Calu3 (cell line): ENCODE measurements at regions of chr17 and their contacts with region 1.

Region 1: DNA sequence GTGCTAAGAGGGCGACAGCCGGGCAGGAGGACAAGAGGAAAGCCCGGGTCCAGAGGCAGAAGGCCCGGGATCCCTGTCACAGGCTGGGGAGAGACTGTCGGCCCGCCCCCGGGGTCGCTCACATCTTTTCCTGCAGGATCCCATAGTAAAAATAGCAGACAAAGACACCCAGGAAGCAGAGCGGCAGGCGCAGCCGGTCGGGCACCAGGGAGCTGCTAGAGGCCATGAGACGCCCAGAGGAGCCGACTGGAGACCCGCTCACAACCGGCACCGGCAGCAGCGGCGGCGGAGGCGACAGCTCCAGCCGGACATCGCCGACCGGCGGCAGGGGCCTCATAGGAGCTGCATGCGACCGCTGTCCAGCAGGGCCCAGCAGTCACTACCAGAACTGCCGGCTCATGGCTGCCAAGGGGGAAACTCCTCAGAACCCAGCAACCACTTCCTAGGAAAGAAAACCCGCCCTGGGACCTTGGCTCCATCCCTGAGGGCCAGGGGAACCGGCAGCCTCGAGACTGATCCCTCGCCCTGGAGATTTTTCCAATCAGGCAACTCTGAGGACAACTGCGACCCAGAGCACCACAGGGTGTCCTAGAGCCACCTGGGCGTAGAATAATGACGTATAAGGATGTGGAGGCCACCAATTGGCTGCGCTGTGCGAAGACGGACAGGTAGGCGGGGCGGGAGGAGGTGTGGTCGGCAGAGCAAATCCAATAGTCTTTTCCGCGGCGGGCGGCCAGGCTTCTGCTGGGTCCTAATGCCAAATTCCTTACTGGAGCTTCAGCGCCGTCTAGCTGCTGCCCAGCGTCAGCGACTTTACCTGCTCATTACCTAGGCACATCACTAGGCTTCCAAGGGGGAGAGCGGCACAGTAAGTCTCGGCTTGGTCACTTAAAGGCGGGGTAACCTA is at the start of gene SLC35B1:
- DNase-seq: peak; percentile 100
- H3K4me3 Mint-ChIP-seq: peak within 1 kb of the TSS; percentile 96
- H3K27ac Mint-ChIP-seq: peak within 1 kb of the TSS; percentile 99
- H3K4me1 Mint-ChIP-seq: peaks cover 37% of the 10 kb centered on the region
- H3K27me3 Mint-ChIP-seq: no peaks in the 10 kb centered on the region
- CTCF ChIP-seq: peak; percentile 87
- total RNA-seq, gene SLC35B1: 117 and 127 TPM in 2 replicates

Region 2: GRCh38 chr17:49239963-49240362 is 467.9 kb before region 1 on chr17:
- CTCF ChIA-PET with region 1: interaction called, 13 read pairs
- intact Hi-C with region 1: no loop called
- DNase-seq: no peak
- H3K4me3 Mint-ChIP-seq: no peak overlapping the region
- H3K27ac Mint-ChIP-seq: no peak overlapping the region
- H3K4me1 Mint-ChIP-seq: no peaks in the 10 kb centered on the region
- H3K27me3 Mint-ChIP-seq: peaks cover 35% of the 10 kb centered on the region
- CTCF ChIP-seq: no peak

Region 3: GRCh38 chr17:49567871-49568694 is 139.8 kb before region 1 on chr17:
- CTCF ChIA-PET with region 1: interaction called, 12 read pairs
- intact Hi-C with region 1: no loop called
- DNase-seq: peak; percentile 98
- H3K4me3 Mint-ChIP-seq: peak overlapping the region; percentile 68
- H3K27ac Mint-ChIP-seq: no peak overlapping the region
- H3K4me1 Mint-ChIP-seq: peaks cover 14% of the 10 kb centered on the region
- H3K27me3 Mint-ChIP-seq: peaks cover 64% of the 10 kb centered on the region
- CTCF ChIP-seq: peak; percentile 98

Region 4: DNA sequence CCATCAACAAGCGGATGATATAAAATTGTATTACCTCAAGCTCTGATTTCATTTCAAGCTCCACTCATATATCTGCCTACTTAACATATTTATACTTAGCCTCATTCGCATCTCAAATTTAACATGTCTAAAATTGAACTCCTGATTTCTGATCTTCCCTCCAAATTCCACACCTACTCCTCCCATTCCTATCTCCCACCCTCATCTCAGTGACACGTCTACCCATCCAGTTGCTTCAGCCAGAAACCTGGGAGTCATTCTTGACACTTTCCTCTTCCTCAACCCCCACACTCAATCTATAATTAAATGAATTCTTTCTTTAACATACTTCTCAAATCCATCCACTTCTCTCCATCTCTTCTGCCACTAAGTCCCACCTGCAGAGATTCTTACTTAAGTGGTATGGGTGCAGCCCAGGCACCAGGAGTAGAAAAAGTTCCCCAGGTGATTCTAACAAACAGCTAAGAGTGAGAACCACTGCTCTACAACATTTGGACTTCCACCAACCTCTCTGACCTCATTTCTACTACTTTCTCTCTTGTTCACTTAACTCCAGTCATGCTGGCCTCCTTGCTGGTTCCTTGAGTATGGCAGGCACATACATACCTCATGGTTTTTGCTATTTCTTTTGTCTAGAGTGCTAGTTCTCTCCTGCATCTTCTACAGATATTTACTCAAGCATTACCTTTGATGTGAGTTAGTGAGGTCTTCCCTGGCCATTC is 48.0 kb before region 1 on chr17:
- CTCF ChIA-PET with region 1: no interaction called
- intact Hi-C with region 1: no loop called
- DNase-seq: no peak
- H3K4me3 Mint-ChIP-seq: no peak overlapping the region
- H3K27ac Mint-ChIP-seq: no peak overlapping the region
- H3K4me1 Mint-ChIP-seq: no peaks in the 10 kb centered on the region
- H3K27me3 Mint-ChIP-seq: no peaks in the 10 kb centered on the region
- CTCF ChIP-seq: no peak

Region 5: DNA sequence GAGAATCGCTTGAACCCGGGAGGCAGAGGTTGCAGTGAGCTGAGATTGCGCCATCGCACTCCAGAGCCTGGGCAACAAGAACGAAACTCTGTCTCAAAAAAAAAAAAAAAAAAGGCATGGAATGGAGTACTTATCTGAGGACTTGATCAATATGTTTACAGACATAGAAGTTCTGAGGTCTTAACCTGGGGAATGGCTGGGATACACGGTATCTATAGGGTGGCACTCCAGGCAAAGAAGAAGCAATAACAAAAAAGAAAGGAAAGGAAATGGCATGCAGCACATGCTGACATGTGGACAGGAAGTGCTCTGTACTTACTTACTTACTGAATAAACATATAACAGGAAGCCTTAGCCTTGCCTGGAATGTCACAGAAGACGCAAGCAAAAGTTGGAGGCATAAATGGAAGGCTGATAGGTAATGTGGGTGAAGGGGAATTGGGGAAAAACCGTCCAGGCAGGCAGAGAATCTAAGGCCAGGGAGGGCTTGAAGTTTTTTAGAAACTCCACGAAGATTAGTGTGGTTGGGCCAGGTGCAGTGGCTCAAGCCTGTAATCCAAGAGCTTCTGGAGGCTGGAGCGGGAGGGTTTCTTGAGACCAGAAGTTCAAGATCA is 19.9 kb before region 1 on chr17:
- CTCF ChIA-PET with region 1: no interaction called
- intact Hi-C with region 1: no loop called
- DNase-seq: no peak
- H3K4me3 Mint-ChIP-seq: no peak overlapping the region
- H3K27ac Mint-ChIP-seq: peak overlapping the region; percentile 28
- H3K4me1 Mint-ChIP-seq: peaks cover 17% of the 10 kb centered on the region
- H3K27me3 Mint-ChIP-seq: peaks cover 22% of the 10 kb centered on the region
- CTCF ChIP-seq: no peak

Region 6: GRCh38 chr17:49779739-49780231 is 71.9 kb after region 1 on chr17:
- CTCF ChIA-PET with region 1: no interaction called
- intact Hi-C with region 1: loop called (anchors 5 kb)
- DNase-seq: peak; percentile 36
- H3K4me3 Mint-ChIP-seq: no peak overlapping the region
- H3K27ac Mint-ChIP-seq: no peak overlapping the region
- H3K4me1 Mint-ChIP-seq: no peaks in the 10 kb centered on the region
- H3K27me3 Mint-ChIP-seq: peaks cover 86% of the 10 kb centered on the region
- CTCF ChIP-seq: peak; percentile 52

Region 7: GRCh38 chr17:49851387-49852291 is 143.8 kb after region 1 on chr17:
- CTCF ChIA-PET with region 1: interaction called, 5 read pairs
- intact Hi-C with region 1: loop called (anchors 5 kb)
- DNase-seq: peak; percentile 91
- H3K4me3 Mint-ChIP-seq: peak overlapping the region; percentile 68
- H3K27ac Mint-ChIP-seq: no peak overlapping the region
- H3K4me1 Mint-ChIP-seq: no peaks in the 10 kb centered on the region
- H3K27me3 Mint-ChIP-seq: peaks cover 59% of the 10 kb centered on the region
- CTCF ChIP-seq: peak; percentile 94